Tibial artery (tissue), 4 donors: ENCODE measurements at regions of chr11 and their contacts with region 1.

Region 1: GRCh38 chr11:130213143-130213978 is 53.8 kb downstream of the ST14 start:
- DNase-seq: peak in 1 of 2 donors; percentile 64
- H3K4me3 ChIP-seq: no peak overlapping the region
- H3K27ac ChIP-seq: no peak overlapping the region
- H3K4me1 ChIP-seq: peaks cover 0 to 7% (median 2%) of the 10 kb centered on the region in 4 donors
- H3K27me3 ChIP-seq: peaks cover 0 to 19% of the 10 kb centered on the region in 2 donors
- CTCF ChIP-seq: peak; percentile 78 to 94

Region 2: DNA sequence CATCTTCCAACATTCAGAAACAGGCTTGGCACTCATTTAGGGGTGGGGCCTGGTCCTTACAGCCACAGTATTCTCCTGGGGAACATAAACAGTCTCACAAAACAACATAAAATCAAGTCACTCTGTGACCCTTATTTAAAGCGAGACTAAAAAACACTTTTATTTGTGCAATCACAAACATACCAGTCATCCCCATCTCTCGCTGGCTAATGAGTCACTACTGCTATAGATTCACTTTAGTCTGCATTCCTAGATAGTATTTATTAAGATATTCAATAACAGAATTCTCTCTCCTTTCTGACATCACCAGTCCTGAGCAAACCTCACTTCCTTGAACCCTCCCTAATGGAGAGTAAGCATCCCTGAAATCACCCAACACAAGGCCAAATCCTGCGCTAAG is 33.4 kb after region 1 on chr11:
- intact Hi-C with region 1: no loop called
- DNase-seq: no peak
- H3K4me3 ChIP-seq: no peak overlapping the region
- H3K27ac ChIP-seq: no peak overlapping the region
- H3K4me1 ChIP-seq: peaks cover 0 to 19% (median 4%) of the 10 kb centered on the region in 4 donors
- H3K27me3 ChIP-seq: no peaks in the 10 kb centered on the region
- CTCF ChIP-seq: no peak

Region 3: GRCh38 chr11:130383344-130384211 is 170.2 kb after region 1 on chr11:
- intact Hi-C with region 1: loop called (anchors 10 kb)
- DNase-seq: no peak
- H3K4me3 ChIP-seq: no peak overlapping the region
- H3K27ac ChIP-seq: no peak overlapping the region
- H3K4me1 ChIP-seq: no peaks in the 10 kb centered on the region
- H3K27me3 ChIP-seq: no peaks in the 10 kb centered on the region
- CTCF ChIP-seq: no peak

Region 4: DNA sequence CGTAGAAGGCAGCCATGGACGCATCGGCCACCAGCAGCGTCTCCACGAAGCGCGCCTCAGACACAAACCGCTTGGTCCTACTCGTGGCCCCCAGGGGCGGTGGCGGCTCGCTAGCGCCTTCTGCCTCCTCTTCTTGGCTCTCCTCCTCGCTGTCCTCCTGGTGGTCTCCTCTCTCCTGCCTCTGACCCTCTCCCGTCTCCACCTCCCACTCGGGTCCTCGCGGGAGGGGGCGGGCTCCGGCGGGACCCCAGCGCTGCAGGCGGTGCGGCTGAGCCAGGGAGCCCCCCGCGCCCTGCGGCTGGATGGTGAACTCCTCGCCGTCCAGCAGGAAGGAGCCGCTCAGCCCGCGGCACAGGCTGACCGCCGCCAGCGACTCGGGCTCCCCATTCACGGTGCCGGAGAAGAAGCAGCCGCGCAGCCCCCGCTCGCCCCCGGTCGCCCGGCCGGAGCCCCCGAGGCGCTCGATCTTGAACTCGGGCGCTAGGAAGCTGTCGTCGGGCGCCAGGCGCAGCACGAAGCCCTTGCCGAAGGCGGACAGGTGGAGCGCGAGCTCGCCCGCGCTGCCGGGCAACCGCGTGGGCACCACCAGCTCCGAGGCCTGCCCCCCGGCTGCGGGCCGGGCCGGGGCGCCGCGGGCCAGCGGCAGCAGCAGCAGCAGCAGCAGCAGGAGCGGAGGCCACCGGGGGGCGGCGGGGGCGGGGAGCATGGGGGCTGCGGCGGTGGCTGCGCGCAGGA is 214.4 kb after region 1 on chr11:
- intact Hi-C with region 1: loop called (anchors 5 kb)
- DNase-seq: no peak
- H3K4me3 ChIP-seq: peak overlapping the region; percentile 52 to 69
- H3K27ac ChIP-seq: peak overlapping the region; percentile 52 to 58
- H3K4me1 ChIP-seq: peaks cover 0 to 37% (median 20%) of the 10 kb centered on the region in 4 donors
- H3K27me3 ChIP-seq: peaks cover 0 to 3% of the 10 kb centered on the region in 2 donors
- CTCF ChIP-seq: peak; percentile 31 to 43

Region 5: DNA sequence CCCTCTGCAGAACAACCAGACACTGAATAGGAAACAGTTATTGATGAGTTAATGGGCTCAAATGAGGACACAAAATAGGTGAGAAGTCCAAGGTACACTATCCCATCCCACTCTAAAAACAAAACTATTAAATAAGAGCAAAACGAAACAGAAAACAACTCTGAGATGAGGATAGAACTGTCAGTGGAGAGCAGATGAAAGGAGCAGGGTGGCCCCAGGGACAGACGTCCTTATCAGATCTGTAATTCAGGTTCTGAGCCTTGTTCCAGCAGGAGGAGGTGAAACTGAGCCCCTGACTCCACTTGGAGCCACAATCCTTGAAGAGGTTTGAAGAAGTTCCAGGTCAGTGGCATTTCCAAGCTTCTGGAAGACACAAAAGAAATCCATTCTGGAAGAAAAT is 711.4 kb after region 1 on chr11:
- intact Hi-C with region 1: loop called (anchors 10 kb)
- DNase-seq: no peak
- H3K4me3 ChIP-seq: no peak overlapping the region
- H3K27ac ChIP-seq: no peak overlapping the region
- H3K4me1 ChIP-seq: no peaks in the 10 kb centered on the region
- H3K27me3 ChIP-seq: no peaks in the 10 kb centered on the region
- CTCF ChIP-seq: no peak